Activated CD8-positive, alpha-beta T cell treated with anti-CD3 and anti-CD28 coated beads for 36 hours (primary cell): ENCODE measurements at regions of chr20 and their contacts with region 1.

Region 1: GRCh38 chr20:60057123-60057801 is 99.0 kb downstream of the CDH26 start:
- DNase-seq: peak; percentile 81
- ATAC-seq: peak; percentile 71
- H3K4me3 Mint-ChIP-seq: peak overlapping the region; percentile 64
- H3K27ac Mint-ChIP-seq: peak overlapping the region; percentile 87
- H3K4me1 Mint-ChIP-seq: peaks cover 37% of the 10 kb centered on the region
- H3K27me3 Mint-ChIP-seq: no peaks in the 10 kb centered on the region
- CTCF ChIP-seq: peak; percentile 76

Region 2: DNA sequence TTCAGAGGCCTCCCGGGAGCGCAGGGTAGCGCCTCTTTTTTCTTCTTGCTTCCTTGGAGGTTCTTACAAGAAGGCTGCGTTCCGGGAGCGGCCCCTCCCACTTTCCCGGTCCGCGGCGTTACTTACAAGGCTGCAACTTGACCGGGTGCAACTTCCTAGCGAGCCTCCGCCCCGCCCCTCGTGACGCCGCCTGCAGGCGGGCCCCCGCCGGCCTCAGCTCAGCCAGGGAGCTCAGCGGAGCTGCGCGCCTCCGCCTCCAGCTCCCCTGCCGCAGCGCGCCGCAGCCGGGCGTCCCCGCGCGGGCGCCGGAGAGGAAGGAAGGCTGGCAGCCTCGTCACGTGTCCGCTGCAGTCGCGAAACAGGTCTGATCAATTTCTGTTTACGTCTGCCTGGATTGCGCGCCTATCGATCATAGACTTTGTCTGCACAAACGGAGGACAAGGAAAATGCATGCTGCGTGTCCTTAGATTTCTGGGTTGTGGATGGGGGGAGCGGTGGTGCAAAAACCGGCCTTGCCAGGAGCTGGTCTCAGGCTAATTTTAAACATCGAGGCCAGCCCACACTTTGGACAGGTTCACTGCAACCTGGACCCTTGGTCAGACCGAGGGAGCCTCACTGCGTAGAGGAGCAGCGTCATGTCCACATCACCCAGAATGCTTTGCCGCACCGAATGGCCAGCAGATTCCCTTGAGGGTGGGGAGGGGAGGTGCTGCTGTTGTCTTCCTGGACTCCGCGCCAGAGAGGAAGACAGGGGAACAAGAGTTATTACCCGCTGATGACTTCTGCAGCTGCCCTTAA is 116.9 kb before region 1 on chr20 and contains the starts of genes FAM217B and PPP1R3D:
- CTCF ChIA-PET with region 1: interaction called, 7 read pairs
- POLR2A ChIA-PET with region 1: interaction called, 6 read pairs
- intact Hi-C with region 1: loop called (anchors 10 kb)
- DNase-seq: peak; percentile 94
- ATAC-seq: peak; percentile 95
- H3K4me3 Mint-ChIP-seq: peak within 1 kb of the TSS; percentile 92
- H3K27ac Mint-ChIP-seq: peak within 1 kb of the TSS; percentile 95
- H3K4me1 Mint-ChIP-seq: peaks cover 29% of the 10 kb centered on the region
- H3K27me3 Mint-ChIP-seq: no peaks in the 10 kb centered on the region
- CTCF ChIP-seq: no peak
- total RNA-seq, gene FAM217B: 17.6 to 18.7 TPM
- total RNA-seq, gene PPP1R3D: 3.9 to 4.2 TPM

Region 3: DNA sequence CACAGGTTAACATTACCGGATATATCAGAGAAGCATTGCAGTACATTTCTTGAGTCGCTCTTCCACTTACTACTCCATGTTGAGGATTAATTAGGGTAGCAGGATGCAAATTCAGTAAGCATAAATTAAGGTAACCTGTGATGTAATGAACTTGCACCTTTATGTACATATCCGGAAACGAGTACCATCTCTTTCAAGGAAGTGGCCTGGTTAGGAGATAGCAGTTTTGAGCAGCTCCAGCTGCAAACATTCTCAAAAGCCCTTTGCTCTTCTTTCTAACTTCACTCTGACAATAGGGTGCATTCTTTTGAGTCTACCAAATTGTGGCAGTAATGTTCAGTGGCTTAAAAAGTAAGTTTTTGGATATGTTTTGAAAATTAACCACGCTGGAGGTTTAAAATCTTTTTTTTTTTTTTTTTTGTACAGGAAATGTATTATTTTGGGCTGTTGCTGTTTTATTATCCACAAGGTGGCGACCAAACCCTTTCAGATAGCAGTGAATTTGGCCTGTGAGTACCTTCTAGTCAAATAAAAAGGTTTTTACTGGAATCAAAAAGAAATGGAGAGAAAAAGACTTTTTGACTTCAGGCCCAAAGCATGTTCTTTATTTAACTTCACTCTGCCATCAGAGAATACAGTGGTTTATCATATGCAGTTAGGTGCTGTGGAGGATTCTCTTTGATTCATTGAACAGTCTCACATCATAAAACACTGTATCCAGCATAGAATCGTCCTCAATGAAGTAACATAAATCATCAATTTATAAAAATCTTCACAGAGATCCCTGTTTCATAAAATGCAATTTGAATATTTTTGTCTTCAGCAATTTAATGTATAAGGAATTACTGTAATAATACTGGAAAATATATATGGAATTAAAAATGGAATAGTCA is 108.2 kb before region 1 on chr20:
- CTCF ChIA-PET with region 1: interaction called, 13 read pairs
- POLR2A ChIA-PET with region 1: no interaction called
- intact Hi-C with region 1: loop called (anchors 10 kb)
- DNase-seq: peak; percentile 53
- ATAC-seq: peak; percentile 79
- H3K4me3 Mint-ChIP-seq: peak overlapping the region; percentile 35
- H3K27ac Mint-ChIP-seq: peak overlapping the region; percentile 90
- H3K4me1 Mint-ChIP-seq: peaks cover 30% of the 10 kb centered on the region
- H3K27me3 Mint-ChIP-seq: no peaks in the 10 kb centered on the region
- CTCF ChIP-seq: peak; percentile 83

Region 4: GRCh38 chr20:60071965-60072364 is 14.7 kb after region 1 on chr20:
- CTCF ChIA-PET with region 1: interaction called, 10 read pairs
- POLR2A ChIA-PET with region 1: no interaction called
- intact Hi-C with region 1: no loop called
- DNase-seq: no peak
- ATAC-seq: no peak
- H3K4me3 Mint-ChIP-seq: no peak overlapping the region
- H3K27ac Mint-ChIP-seq: no peak overlapping the region
- H3K4me1 Mint-ChIP-seq: no peaks in the 10 kb centered on the region
- H3K27me3 Mint-ChIP-seq: no peaks in the 10 kb centered on the region
- CTCF ChIP-seq: no peak

Region 5: DNA sequence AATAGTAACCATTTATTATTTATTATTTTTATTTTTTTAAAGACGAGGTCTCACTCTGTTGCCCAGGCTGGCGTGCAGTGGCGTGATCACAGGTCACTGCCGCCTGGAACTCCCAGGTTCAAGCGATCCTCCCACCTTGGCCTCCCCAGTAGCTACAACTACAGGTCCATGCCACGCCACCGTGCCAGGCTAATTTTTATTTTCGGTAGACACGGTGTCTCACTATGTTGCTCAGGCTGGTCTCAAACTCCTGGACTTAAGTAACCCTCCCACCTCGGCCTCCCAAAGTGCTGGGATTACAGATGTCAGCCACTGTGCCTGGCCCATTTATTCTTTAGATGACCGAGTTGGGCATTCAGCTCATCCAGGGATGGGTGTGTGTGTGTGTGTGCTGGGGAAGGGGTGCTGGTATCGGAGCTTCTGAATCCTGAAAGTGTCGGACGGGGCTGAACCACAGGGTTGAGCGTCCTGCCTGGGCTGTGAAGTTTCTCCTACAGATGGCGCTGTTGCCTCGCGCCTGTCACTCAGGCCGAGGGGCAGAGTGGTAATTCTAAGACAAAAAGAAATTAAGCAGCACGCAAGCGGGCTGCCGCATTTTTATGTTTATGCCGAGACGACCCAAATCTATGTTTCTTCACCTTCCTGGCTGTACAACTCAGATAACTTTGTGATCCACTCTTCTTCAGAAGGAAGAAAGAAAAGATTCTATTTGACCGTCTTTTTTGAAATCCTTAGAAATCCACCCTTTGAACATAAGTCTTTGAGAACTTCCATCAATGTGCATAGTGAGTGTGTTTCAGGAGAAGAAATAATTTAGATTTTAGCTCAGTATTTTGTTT is 153.7 kb after region 1 on chr20:
- CTCF ChIA-PET with region 1: interaction called, 22 read pairs
- POLR2A ChIA-PET with region 1: no interaction called
- intact Hi-C with region 1: no loop called
- DNase-seq: peak; percentile 72
- ATAC-seq: peak; percentile 67
- H3K4me3 Mint-ChIP-seq: no peak overlapping the region
- H3K27ac Mint-ChIP-seq: no peak overlapping the region
- H3K4me1 Mint-ChIP-seq: no peaks in the 10 kb centered on the region
- H3K27me3 Mint-ChIP-seq: peaks cover 2% of the 10 kb centered on the region
- CTCF ChIP-seq: peak; percentile 81

Region 6: GRCh38 chr20:60262967-60263603 is 205.8 kb after region 1 on chr20:
- CTCF ChIA-PET with region 1: interaction called, 24 read pairs
- POLR2A ChIA-PET with region 1: no interaction called
- intact Hi-C with region 1: no loop called
- DNase-seq: peak; percentile 60
- ATAC-seq: peak; percentile 42
- H3K4me3 Mint-ChIP-seq: no peak overlapping the region
- H3K27ac Mint-ChIP-seq: no peak overlapping the region
- H3K4me1 Mint-ChIP-seq: peaks cover 13% of the 10 kb centered on the region
- H3K27me3 Mint-ChIP-seq: no peaks in the 10 kb centered on the region
- CTCF ChIP-seq: peak; percentile 75